ENCODE measurements at regions of chr1 and their contacts with region 1.

Region 1: DNA sequence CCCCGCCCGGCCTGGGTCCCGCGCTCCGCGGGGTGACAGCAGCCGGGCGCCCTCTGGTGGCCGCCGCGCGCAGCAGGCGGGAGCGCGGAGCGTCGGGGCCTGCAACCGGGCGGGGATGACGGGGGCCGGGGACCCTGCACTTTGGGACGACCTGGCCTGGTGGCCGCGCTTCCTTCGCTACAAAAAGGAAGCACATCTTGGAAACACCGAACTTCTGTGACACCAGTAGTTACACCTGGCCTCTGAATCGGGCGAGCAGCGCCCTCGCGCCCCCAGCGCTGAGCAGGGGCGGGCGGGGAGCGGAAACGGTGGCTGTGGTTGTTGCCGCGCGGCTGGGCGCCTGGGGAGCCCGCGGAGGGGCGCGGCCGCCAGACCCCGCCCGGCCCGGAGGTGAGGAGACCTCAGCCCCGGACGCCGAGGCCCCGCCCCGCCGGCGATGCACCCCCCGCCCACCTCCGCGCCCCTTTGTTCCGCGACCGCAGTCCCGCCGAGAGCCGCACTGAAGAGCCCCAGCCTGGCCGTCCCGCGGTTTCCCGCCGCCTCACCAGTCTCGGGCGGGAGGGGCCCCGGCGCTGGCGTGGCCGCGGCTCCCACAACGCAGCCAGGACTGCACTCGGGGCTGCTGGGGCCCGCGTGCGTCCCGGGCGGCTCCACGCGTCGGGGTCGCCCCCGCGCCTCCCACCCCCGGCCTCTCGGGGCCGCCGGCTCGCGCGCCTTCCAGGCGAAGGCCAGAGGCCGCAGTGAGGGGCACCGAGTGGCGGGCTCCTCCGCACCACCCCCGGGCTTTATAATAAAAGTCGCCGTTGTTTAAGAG is 59.3 kb downstream of the H3-3A start:
- DNase-seq: peak; percentile 72 to 92
- H3K4me3 ChIP-seq: peak overlapping the region; percentile 67 to 76 (median 73)
- H3K27ac ChIP-seq: peak overlapping the region; percentile 91 to 96 (median 93)
- H3K4me1 ChIP-seq: peaks cover 12 to 50% (median 46%) of the 10 kb centered on the region in 4 donors
- H3K27me3 ChIP-seq: no peaks in the 10 kb centered on the region
- CTCF ChIP-seq: peak in 5 of 7 experiments; percentile 34 to 96 (median 72)
- EP300 ChIP-seq: no peak
- POLR2A ChIP-seq: no peak

Region 2: GRCh38 chr1:226064816-226065248 is 57.0 kb before region 1 on chr1:
- intact Hi-C with region 1: loop called (anchors 5 kb)
- DNase-seq: peak; percentile 52 to 89
- H3K4me3 ChIP-seq: peak overlapping the region; percentile 64 to 88 (median 78)
- H3K27ac ChIP-seq: peak overlapping the region in 4 of 5 donors; percentile 98 to 100 (median 100)
- H3K4me1 ChIP-seq: peaks cover 41 to 72% (median 56%) of the 10 kb centered on the region in 4 donors
- H3K27me3 ChIP-seq: no peaks in the 10 kb centered on the region
- CTCF ChIP-seq: peak in 2 of 7 experiments; percentile 47 to 67
- EP300 ChIP-seq: no peak
- POLR2A ChIP-seq: no peak

Region 3: DNA sequence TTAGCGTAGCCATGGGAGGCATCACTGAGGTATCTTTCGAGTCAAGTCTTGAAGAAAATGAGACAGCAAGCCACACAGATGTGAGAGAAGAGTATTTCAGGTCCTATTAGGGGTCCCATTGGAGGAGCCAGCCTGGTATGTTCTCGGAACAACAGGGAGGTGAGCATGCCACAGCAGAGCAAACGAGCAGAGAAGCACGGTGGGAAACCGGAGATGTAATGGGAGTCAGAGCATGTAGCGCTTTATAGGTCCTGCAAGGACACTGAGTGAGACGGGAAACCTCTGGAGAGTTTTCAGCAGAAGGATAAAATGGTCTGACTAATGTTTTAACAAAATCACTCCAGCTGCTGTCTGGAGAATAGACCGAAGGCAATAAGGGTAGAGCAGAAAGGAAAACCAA is 43.4 kb before region 1 on chr1:
- intact Hi-C with region 1: loop called (anchors 5 kb)
- DNase-seq: no peak
- H3K4me3 ChIP-seq: no peak overlapping the region
- H3K27ac ChIP-seq: no peak overlapping the region
- H3K4me1 ChIP-seq: peaks cover 0 to 12% (median 9%) of the 10 kb centered on the region in 4 donors
- H3K27me3 ChIP-seq: no peaks in the 10 kb centered on the region
- CTCF ChIP-seq: no peak
- EP300 ChIP-seq: no peak
- POLR2A ChIP-seq: no peak

Region 4: DNA sequence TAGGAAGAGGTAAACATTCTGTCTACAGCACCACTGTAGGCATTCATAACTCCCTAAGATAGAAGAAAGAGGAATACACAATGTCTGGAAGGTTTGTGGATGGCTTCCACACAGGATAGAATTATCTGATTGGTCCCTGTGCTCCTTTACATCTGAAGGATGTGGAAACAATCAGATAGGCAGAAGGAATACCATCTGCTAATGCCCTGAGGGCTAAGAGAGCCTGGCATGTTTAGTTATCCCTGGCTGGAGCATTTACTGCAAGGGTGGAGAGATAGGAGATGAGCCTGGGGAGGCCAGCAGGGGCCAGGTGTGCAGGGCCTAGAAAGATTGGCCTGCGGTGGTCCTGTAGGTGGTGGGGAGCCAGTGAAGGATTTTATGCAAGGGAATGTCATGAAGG is 73.3 kb after region 1 on chr1:
- intact Hi-C with region 1: loop called (anchors 5 kb)
- DNase-seq: no peak
- H3K4me3 ChIP-seq: no peak overlapping the region
- H3K27ac ChIP-seq: no peak overlapping the region
- H3K4me1 ChIP-seq: peaks cover 0 to 7% (median 0%) of the 10 kb centered on the region in 4 donors
- H3K27me3 ChIP-seq: no peaks in the 10 kb centered on the region
- CTCF ChIP-seq: no peak
- EP300 ChIP-seq: no peak
- POLR2A ChIP-seq: no peak

Measured in stomach (tissue), 19 donors.